OCI-LY7 (cell line): ENCODE measurements at regions of chr4 and their contacts with region 1.

Region 1: GRCh38 chr4:86769794-86770193 is 79.4 kb downstream of the SLC10A6 start:
- DNase-seq: no peak
- H3K4me3 ChIP-seq: no peak overlapping the region
- H3K27ac ChIP-seq: no peak overlapping the region
- H3K4me1 ChIP-seq: no peaks in the 10 kb centered on the region
- CTCF ChIP-seq: no peak

Region 2: DNA sequence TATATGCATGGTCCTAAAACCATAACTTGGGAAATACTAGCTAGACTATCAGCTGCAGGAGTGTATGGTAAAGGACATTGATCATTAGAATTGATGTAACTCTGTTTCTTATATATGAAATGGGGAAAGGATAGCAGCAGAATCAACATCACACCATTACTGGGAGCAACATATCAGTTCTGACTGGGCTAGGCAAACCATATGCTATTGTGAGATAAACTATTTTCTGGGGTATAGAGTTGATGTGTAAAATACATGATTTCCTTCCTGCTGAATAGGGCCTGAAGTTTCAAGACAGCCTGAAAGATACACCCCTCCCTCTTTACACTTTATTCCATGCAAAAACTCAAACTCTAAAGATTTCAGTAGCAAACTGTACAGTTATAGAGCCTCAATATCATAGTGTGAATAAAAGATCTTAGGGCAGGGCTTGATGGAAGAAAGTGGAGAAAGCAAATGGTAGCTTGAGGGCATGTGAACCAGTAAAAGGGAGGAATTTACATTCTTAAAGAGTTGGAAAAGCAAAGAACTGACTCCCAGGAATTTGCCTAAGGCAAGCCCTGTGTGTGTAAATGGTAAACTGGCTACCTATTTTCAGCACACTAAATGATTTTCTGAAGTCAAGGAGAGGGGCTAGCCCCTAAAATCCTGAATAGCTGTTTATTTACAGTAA is 814.0 kb before region 1 on chr4:
- CTCF ChIA-PET with region 1: no interaction called
- POLR2A ChIA-PET with region 1: no interaction called
- intact Hi-C with region 1: loop called (anchors 5 kb)
- DNase-seq: no peak
- H3K4me3 ChIP-seq: no peak overlapping the region
- H3K27ac ChIP-seq: no peak overlapping the region
- H3K4me1 ChIP-seq: no peaks in the 10 kb centered on the region
- CTCF ChIP-seq: no peak

Region 3: DNA sequence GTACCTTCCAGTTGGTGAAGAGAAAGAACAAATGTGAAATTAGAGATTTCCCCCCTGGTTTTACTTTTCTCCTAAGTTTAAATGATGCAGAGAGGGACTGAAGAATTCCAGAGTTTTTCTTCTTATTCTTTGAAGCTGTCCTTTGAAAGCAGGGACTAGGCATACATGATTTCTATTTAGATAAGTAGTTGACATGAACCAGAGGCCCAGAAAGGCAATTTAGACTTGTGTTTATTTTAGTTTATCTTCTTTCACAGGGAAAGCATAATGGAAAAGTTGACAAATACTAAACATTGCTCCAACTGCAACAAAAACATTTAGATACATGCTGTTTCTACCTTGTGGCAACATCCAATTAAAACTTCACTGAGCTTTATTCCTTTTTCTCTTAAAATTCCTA is 143.7 kb before region 1 on chr4:
- CTCF ChIA-PET with region 1: no interaction called
- POLR2A ChIA-PET with region 1: no interaction called
- intact Hi-C with region 1: no loop called
- DNase-seq: no peak
- H3K4me3 ChIP-seq: no peak overlapping the region
- H3K27ac ChIP-seq: no peak overlapping the region
- H3K4me1 ChIP-seq: no peaks in the 10 kb centered on the region
- CTCF ChIP-seq: no peak

Region 4: GRCh38 chr4:86831262-86832130 is 61.7 kb after region 1 on chr4:
- CTCF ChIA-PET with region 1: no interaction called
- POLR2A ChIA-PET with region 1: no interaction called
- intact Hi-C with region 1: no loop called
- DNase-seq: no peak
- H3K4me3 ChIP-seq: no peak overlapping the region
- H3K27ac ChIP-seq: no peak overlapping the region
- H3K4me1 ChIP-seq: no peaks in the 10 kb centered on the region
- CTCF ChIP-seq: no peak